ENCODE measurements at regions of chr1 and their contacts with region 1.

Region 1: GRCh38 chr1:171715813-171716251 is 26.0 kb downstream of the VAMP4 start:
- DNase-seq: peak; percentile 82
- ATAC-seq: peak; percentile 58
- H3K4me3 ChIP-seq: no peak overlapping the region
- H3K27ac ChIP-seq: no peak overlapping the region
- H3K4me1 ChIP-seq: no peaks in the 10 kb centered on the region
- H3K27me3 ChIP-seq: no peaks in the 10 kb centered on the region
- CTCF ChIP-seq: peak; percentile 94

Region 2: DNA sequence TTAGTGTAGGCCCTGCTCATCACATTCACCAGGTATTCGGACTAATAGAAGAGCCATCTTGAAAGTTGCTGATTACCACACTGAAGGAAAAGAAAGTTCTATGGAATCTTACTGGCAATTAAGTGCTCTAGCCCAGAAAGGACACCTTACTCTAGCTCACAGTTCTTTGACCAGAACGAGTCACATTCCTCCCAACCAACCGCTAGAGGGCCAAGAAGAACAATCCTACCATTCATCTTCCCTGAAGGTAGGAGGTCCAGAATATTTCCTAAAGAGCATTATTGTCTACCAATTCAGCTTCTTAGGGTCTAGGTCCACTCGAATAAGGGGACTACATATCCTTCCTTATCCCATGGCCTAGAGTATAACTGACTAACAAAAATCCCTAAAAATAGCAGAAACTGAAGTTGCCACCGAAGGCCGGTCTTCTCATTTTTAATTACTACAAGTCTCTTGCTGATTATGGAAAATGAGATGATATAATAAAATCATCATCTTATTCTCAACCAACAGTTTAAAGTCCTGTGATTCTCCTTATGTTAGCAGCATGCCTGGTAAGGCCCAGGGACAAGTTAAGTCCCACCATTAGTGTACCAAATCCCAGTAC is 470.3 kb before region 1 on chr1:
- CTCF ChIA-PET with region 1: no interaction called
- POLR2A ChIA-PET with region 1: no interaction called
- intact Hi-C with region 1: loop called (anchors 5 kb)
- DNase-seq: peak; percentile 82
- ATAC-seq: peak; percentile 99
- H3K4me3 ChIP-seq: no peak overlapping the region
- H3K27ac ChIP-seq: no peak overlapping the region
- H3K4me1 ChIP-seq: no peaks in the 10 kb centered on the region
- H3K27me3 ChIP-seq: peaks cover 48% of the 10 kb centered on the region
- CTCF ChIP-seq: peak; percentile 98

Region 3: GRCh38 chr1:171566467-171566866 is 149.4 kb before region 1 on chr1:
- CTCF ChIA-PET with region 1: interaction called, 4 read pairs
- POLR2A ChIA-PET with region 1: no interaction called
- intact Hi-C with region 1: loop called (anchors 1 kb)
- DNase-seq: peak; percentile 55
- ATAC-seq: peak; percentile 53
- H3K4me3 ChIP-seq: no peak overlapping the region
- H3K27ac ChIP-seq: no peak overlapping the region
- H3K4me1 ChIP-seq: no peaks in the 10 kb centered on the region
- H3K27me3 ChIP-seq: no peaks in the 10 kb centered on the region
- CTCF ChIP-seq: peak; percentile 82

Region 4: DNA sequence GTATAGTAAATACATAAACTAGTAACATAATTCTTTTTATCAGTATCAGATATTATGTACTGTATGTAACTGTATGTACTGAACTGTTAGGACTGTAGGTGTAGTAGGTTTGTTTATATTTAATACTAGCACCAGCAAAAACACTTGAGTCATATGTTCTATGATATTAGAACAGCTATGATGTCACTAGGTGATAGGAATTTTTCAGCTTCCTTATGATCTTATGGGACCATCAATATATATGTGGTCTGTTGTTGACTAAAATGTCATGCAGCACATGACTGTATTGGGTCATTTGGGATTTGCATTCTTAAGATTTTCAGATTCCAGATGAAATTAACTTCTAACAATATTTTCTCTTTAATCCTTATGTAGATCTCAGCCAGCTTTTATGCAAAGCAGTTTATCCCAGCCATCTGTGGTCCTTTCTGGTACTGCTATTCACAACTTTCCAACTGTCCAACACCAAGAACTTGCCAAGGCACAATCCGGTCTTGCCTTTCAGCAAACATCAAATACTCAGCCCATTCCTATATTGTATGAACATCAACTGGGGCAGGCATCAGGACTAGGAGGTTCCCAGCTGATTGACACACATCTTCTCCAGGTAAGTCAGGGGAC is 132.1 kb before region 1 on chr1:
- CTCF ChIA-PET with region 1: interaction called, 5 read pairs
- POLR2A ChIA-PET with region 1: no interaction called
- intact Hi-C with region 1: loop called (anchors 5 kb)
- DNase-seq: no peak
- ATAC-seq: peak; percentile 16; the same call in 1 of the 2 replicates
- H3K4me3 ChIP-seq: no peak overlapping the region
- H3K27ac ChIP-seq: no peak overlapping the region
- H3K4me1 ChIP-seq: no peaks in the 10 kb centered on the region
- H3K27me3 ChIP-seq: no peaks in the 10 kb centered on the region
- CTCF ChIP-seq: no peak

Region 5: DNA sequence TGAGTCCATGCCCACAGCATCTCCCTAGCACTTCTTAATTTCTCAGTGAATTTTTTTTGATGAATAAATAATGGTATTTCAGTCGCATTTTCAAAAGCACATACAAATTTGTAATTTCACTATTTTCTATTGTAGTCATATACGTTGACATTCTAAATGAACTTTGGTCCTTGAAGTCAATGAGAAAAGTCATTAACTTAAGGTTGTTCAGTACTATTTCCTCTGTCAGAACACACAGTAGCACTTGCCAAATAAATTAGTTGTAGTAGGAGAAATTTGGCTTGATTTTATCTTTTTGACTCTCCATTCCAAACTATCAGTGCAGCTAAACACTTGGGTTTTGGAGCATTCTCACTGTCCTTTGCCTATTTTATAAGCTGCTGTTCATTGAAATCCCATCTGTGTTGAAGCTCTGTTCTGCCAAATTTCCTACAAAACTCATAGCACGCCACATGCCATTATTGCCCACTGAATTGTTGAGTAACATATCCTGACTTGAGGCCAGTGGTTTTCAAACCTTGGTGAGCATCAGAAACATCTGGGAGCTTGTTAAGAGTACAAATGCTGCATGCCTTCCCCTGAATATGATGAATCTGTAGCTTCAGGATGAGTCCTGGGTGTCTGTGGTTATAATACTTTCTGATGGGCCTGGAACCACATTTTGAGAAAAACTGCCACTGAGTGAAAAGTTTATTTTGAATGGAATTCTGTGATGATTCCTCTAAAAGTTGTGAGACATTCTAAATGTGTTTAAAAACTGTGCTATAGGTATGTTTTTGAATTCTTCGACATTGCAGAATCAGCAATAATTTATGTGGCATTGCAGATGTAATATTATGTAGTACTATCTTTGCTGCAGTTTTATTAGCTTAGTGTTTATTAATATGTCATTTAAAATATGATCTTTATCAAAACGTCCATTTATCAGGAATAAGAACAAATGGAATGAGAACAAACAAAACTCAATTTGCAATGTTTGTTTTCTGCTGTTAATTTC is 204.4 kb after region 1 on chr1:
- CTCF ChIA-PET with region 1: no interaction called
- POLR2A ChIA-PET with region 1: no interaction called
- intact Hi-C with region 1: no loop called
- DNase-seq: no peak
- ATAC-seq: no peak
- H3K4me3 ChIP-seq: no peak overlapping the region
- H3K27ac ChIP-seq: no peak overlapping the region
- H3K4me1 ChIP-seq: no peaks in the 10 kb centered on the region
- H3K27me3 ChIP-seq: peaks cover 74% of the 10 kb centered on the region
- CTCF ChIP-seq: no peak